ENCODE measurements at regions of chr6 and their contacts with region 1.

Region 1: DNA sequence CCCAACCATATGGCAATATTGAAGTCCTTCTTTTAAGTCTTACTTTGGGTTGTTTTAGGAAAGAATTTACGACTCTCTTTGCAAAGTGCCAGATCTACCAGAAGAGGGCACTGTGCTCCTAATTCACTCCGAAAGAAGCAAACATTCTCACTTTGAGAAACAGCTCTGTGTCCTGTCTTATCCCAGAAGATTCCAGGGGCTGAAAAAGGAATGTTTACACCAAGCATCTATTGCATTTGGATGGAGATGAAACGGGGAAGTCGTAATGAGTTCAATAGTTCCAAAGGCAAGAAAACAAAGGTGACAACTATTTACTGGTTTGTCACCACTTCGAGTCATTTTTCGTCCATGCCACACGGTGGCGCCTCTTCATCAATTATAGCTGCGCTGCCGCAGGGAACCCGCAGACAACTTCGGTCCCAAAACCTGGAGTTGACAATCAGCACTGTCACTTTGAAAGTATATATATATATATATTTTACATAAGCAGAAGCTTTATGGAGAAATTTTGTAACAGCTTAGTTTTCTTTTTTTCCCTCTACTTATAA is 121.6 kb downstream of the MOXD1 start:
- H3K4me3 ChIP-seq: peak overlapping the region; percentile 46
- H3K27ac ChIP-seq: no peak overlapping the region
- H3K4me1 ChIP-seq: no peaks in the 10 kb centered on the region
- CTCF ChIP-seq: peak; percentile 85

Region 2: GRCh38 chr6:131914967-131915751 is 364.5 kb before region 1 on chr6:
- CTCF ChIA-PET with region 1: interaction called, 66 read pairs
- POLR2A ChIA-PET with region 1: no interaction called
- H3K4me3 ChIP-seq: no peak overlapping the region
- H3K27ac ChIP-seq: no peak overlapping the region
- H3K4me1 ChIP-seq: no peaks in the 10 kb centered on the region
- CTCF ChIP-seq: peak; percentile 72

Region 3: DNA sequence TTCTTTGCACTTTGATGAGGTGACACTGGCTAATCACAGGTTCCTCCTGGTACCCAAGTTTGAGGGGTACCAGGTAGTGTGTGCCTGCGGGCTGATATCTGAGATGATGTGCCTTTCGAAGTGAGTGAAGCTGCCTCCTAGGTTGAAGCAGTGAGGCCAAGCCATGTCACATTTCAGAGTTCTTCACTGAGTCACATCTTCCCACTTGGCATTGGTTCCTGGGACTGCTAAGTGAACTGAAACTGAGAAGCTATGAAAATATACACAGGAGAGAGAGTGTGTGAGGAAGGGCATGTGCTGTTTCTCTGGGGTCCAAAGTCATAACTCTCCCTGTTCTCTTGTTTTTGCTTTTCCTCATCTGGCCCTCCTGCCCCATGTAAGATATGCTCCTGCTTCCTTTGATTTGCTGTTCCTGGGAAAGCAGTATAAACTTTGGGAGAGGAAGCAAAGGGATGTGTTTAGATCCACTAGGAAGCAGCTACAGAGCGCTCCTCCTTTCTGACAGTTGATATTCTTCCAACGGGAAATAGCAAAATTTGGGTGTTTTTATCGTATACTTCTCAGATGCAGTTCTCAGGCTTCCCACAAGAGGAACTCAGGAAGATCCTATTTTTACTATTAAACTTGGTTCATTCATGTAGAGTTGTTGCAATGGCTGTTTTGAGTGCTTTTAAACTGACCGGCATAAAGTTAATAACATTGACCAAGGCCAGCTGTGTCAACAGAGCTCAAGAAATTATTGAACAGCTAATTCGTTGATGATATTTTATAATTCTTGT is 32.1 kb before region 1 on chr6:
- CTCF ChIA-PET with region 1: interaction called, 20 read pairs
- POLR2A ChIA-PET with region 1: no interaction called
- H3K4me3 ChIP-seq: no peak overlapping the region
- H3K27ac ChIP-seq: no peak overlapping the region
- H3K4me1 ChIP-seq: no peaks in the 10 kb centered on the region
- CTCF ChIP-seq: no peak

Region 4: GRCh38 chr6:132333639-132334520 is 54.2 kb after region 1 on chr6:
- CTCF ChIA-PET with region 1: interaction called, 14 read pairs
- POLR2A ChIA-PET with region 1: no interaction called
- H3K4me3 ChIP-seq: no peak overlapping the region
- H3K27ac ChIP-seq: no peak overlapping the region
- H3K4me1 ChIP-seq: no peaks in the 10 kb centered on the region; the same call in 1 of the 2 replicates
- CTCF ChIP-seq: no peak

Region 5: GRCh38 chr6:132465530-132466485 is 186.1 kb after region 1 on chr6:
- CTCF ChIA-PET with region 1: interaction called, 30 read pairs
- POLR2A ChIA-PET with region 1: no interaction called
- H3K4me3 ChIP-seq: no peak overlapping the region
- H3K27ac ChIP-seq: no peak overlapping the region
- H3K4me1 ChIP-seq: no peaks in the 10 kb centered on the region
- CTCF ChIP-seq: no peak

Region 6: DNA sequence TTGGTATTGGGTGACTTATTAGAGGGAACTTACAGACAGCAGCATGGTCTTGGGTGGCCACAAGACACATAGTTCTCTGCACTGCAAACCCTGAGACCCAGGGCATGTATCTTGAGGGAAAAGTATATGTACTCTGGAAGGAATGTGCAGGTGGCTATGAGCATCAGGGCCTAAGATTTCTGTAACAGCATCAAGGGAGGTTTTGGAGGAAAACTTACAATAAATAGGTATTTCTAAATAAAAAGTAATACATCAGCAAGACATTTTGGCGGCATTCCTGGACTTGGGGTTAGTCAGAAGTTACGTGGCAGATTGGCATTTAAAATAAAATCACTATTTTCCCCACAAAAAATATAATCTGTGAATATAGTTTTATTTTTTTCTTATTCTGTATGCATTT is 241.3 kb after region 1 on chr6:
- CTCF ChIA-PET with region 1: interaction called, 15 read pairs
- POLR2A ChIA-PET with region 1: no interaction called
- H3K4me3 ChIP-seq: no peak overlapping the region
- H3K27ac ChIP-seq: no peak overlapping the region
- H3K4me1 ChIP-seq: no peaks in the 10 kb centered on the region
- CTCF ChIP-seq: no peak